Stomach (tissue), 19 donors: ENCODE measurements at regions of chr2 and their contacts with region 1.

Region 1: DNA sequence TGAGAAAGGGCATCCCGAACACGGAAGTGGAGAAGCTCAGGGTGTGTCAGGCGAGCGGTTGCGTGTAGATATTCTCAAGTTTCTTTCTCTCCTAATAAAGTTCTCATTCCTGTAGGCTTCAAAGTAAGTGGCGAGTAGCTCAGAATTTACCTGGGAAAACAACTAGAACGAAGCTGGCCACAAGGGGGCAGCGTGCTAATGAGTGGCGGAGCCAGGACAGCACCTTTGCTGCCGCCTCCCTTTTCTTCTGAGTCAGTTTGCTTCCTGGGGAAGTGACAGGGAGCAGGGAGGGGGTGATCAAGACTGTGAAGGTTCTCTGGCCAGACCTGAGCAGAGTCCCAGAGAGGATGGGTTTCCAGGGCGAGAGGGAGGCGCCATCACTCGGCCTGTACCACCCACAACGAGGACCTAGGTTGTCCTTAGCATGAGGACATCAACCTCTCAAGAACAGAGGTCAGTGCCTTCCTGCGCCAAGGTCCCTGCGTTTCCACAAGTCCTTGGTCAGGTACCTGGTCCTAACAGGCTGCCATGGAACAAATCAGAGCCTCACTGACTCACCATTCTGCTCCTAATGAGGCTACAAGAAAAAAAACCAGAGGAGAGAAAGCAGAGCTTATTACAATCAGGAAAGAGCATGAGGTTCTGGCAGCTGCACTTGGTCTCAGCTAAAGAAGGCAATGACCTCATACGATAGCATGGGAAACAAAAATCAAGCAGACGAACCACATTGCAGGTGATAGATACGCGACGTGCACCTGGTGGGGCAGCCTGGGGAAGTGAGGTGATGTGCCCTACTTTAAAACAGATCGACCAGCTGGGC is 98.6 kb downstream of the PLB1 start:
- DNase-seq: peak; percentile 96
- H3K4me3 ChIP-seq: peak overlapping the region in 1 of 4 donors; percentile 17
- H3K27ac ChIP-seq: peak overlapping the region; percentile 63 to 89 (median 87)
- H3K4me1 ChIP-seq: peaks cover 10 to 32% (median 24%) of the 10 kb centered on the region in 4 donors
- H3K27me3 ChIP-seq: no peaks in the 10 kb centered on the region
- CTCF ChIP-seq: peak in 6 of 7 experiments; percentile 63 to 93 (median 83)
- EP300 ChIP-seq: no peak
- POLR2A ChIP-seq: no peak

Region 2: DNA sequence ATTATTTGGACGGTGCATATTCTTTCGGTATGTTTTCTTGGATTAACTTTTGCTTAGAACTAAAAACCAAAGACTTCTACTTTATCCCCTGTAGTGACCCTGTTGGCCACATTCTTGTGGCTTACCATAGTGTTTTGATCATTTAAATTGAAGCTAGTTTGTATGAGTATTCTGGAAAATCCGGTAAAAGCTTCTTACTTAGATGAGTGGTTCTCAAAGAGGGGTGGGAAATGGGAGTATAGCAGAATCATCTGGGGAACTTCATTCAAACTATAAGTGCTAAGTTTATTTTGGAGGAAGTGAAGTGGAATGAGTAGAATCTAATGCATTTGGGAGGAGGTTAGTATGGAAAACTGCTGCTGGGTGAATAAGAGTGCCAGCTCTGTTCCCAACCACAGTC is 160.9 kb after region 1 on chr2:
- intact Hi-C with region 1: loop called (anchors 5 kb)
- DNase-seq: no peak
- H3K4me3 ChIP-seq: peak overlapping the region; percentile 82 to 94 (median 89)
- H3K27ac ChIP-seq: peak overlapping the region in 4 of 5 donors; percentile 100
- H3K4me1 ChIP-seq: peaks cover 48 to 75% (median 62%) of the 10 kb centered on the region in 4 donors
- H3K27me3 ChIP-seq: no peaks in the 10 kb centered on the region
- CTCF ChIP-seq: no peak
- EP300 ChIP-seq: no peak
- POLR2A ChIP-seq: no peak